Activated CD4-positive, alpha-beta memory T cell treated with anti-CD3 and anti-CD28 coated beads for 36 hours (primary cell): ENCODE measurements at regions of chr13 and their contacts with region 1.

Region 1: GRCh38 chr13:22061351-22061805 is 390.5 kb downstream of the FGF9 start:
- DNase-seq: peak; percentile 77
- H3K4me3 Mint-ChIP-seq: peak overlapping the region; percentile 44
- H3K27ac Mint-ChIP-seq: peak overlapping the region; percentile 82
- H3K4me1 Mint-ChIP-seq: peaks cover 66% of the 10 kb centered on the region
- H3K27me3 Mint-ChIP-seq: no peaks in the 10 kb centered on the region

Region 2: DNA sequence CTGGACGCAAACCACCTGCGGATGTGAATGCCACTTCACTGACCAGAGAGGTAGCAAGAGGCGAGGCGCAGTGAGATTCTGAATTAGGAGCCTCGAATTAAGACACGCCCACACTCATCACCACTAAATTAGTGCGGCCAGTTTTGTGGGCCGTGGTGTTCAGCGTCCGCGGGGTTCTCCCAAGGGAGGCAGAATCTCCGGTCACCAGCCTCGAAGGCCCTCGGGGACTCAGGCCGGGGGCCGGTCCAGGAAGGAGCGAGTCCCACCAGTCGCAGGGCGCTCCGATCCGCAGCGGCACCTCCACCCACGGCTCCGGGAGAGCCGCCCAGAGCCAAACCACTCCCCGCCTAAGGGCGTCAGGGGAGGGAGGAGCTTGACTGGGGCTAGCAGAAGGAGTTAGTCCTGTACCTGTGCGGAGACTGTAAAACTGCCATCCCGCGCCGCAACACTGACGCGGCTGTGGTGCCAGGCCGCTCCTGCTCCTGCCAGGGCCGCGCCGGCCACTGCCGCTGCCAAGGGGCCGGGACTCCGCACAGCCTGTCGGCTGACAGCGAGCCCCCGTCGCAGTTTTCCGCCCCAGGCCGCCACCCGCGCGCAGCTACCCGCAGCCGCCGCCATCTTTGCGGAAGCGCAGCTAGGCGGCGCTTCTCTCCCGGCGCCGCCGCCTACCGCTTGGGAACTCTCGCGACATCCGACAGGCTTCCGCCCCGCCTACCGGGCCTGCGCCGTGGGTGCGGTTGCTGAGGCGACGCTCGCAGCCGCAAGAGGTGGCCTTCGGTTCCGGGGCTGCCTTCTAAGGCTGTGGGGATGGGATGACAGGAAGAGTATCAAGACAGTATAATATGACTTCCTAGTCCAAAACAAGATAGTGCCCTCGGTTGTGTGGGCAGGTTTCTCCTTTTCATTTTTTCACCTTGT is 457.6 kb before region 1 on chr13 and contains the start of gene MICU2:
- CTCF ChIA-PET with region 1: no interaction called
- POLR2A ChIA-PET with region 1: no interaction called
- intact Hi-C with region 1: loop called (anchors 10 kb)
- DNase-seq: peak; percentile 97
- H3K4me3 Mint-ChIP-seq: peak within 1 kb of the TSS; percentile 81
- H3K27ac Mint-ChIP-seq: peak within 1 kb of the TSS; percentile 89
- H3K4me1 Mint-ChIP-seq: peaks cover 26% of the 10 kb centered on the region
- H3K27me3 Mint-ChIP-seq: peaks cover 5% of the 10 kb centered on the region
- total RNA-seq, gene MICU2: 32.6 to 33.3 TPM

Region 3: GRCh38 chr13:21686751-21687391 is 374.5 kb before region 1 on chr13:
- CTCF ChIA-PET with region 1: no interaction called
- POLR2A ChIA-PET with region 1: no interaction called
- intact Hi-C with region 1: loop called (anchors 2 kb)
- DNase-seq: peak; percentile 64
- H3K4me3 Mint-ChIP-seq: no peak overlapping the region
- H3K27ac Mint-ChIP-seq: peak overlapping the region; percentile 26
- H3K4me1 Mint-ChIP-seq: peaks cover 10% of the 10 kb centered on the region
- H3K27me3 Mint-ChIP-seq: peaks cover 2% of the 10 kb centered on the region

Region 4: GRCh38 chr13:21872795-21873194 is 188.6 kb before region 1 on chr13:
- CTCF ChIA-PET with region 1: no interaction called
- POLR2A ChIA-PET with region 1: no interaction called
- intact Hi-C with region 1: no loop called
- DNase-seq: no peak
- H3K4me3 Mint-ChIP-seq: no peak overlapping the region
- H3K27ac Mint-ChIP-seq: no peak overlapping the region
- H3K4me1 Mint-ChIP-seq: no peaks in the 10 kb centered on the region
- H3K27me3 Mint-ChIP-seq: peaks cover 2% of the 10 kb centered on the region

Region 5: DNA sequence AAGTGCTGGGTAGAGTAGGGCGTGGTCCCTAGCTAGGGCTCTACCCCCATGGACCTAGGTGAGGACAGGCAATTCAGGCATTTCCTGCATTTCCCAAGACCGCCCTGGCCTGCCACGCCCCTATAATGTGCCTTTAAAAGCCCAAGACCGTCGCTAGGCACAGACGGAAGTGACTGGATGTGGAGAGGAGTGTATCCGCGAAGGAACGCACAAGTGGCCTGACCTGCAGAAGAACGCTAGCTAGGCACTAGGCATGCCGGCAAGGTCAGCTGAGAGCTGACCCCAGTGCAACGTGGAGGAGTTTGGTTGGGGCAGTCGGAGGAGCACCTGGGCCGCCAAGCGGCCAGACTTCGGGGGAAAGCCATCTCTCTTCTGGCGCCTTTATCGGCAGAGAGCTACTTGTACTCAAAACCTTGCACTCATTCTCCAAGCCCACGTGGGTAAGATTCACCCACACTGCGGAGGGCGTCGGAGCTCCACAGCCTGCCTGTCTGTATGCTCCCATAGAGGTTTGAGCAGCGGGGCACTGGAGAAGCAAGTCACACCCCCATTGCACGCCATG is 20.5 kb before region 1 on chr13:
- CTCF ChIA-PET with region 1: no interaction called
- POLR2A ChIA-PET with region 1: no interaction called
- intact Hi-C with region 1: no loop called
- DNase-seq: no peak
- H3K4me3 Mint-ChIP-seq: peak overlapping the region; percentile 64
- H3K27ac Mint-ChIP-seq: no peak overlapping the region
- H3K4me1 Mint-ChIP-seq: peaks cover 12% of the 10 kb centered on the region
- H3K27me3 Mint-ChIP-seq: no peaks in the 10 kb centered on the region

Region 6: GRCh38 chr13:22073718-22074117 is 12.3 kb after region 1 on chr13:
- CTCF ChIA-PET with region 1: interaction called, 5 read pairs
- POLR2A ChIA-PET with region 1: interaction called, 5 read pairs
- intact Hi-C with region 1: loop called (anchors 1 kb)
- DNase-seq: no peak
- H3K4me3 Mint-ChIP-seq: no peak overlapping the region
- H3K27ac Mint-ChIP-seq: peak overlapping the region; percentile 28
- H3K4me1 Mint-ChIP-seq: peaks cover 47% of the 10 kb centered on the region
- H3K27me3 Mint-ChIP-seq: no peaks in the 10 kb centered on the region

Region 7: GRCh38 chr13:22126433-22127021 is 65.1 kb after region 1 on chr13:
- CTCF ChIA-PET with region 1: no interaction called
- POLR2A ChIA-PET with region 1: no interaction called
- intact Hi-C with region 1: loop called (anchors 5 kb)
- DNase-seq: no peak
- H3K4me3 Mint-ChIP-seq: no peak overlapping the region
- H3K27ac Mint-ChIP-seq: no peak overlapping the region
- H3K4me1 Mint-ChIP-seq: peaks cover 34% of the 10 kb centered on the region
- H3K27me3 Mint-ChIP-seq: no peaks in the 10 kb centered on the region

Region 8: DNA sequence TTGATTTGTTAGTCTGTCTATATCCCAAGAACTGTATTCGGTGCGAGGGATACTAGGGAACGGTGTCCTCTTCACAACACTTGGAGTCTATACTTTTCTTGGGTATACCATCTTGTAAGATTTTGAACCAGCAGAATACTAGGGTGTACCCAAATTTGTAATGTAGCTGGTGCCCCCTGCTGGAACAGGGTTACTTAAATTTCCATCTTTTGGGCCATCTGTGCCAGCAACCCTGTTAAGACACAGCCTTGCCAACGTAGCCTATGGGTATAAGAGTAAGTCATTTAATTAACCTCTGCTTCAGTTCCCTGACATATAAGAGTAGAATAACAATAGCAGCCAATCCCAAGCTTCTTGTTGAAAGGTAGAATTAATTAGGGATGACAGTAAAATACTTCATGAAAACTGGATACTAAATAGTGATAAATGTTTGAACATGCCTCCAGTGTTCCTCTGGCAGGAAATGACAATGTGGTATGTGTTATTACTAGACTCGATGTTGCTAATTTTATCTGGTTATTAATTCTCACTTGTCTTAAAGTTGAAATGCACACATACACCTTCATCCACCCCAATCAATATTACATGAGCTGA is 217.1 kb after region 1 on chr13:
- CTCF ChIA-PET with region 1: interaction called, 4 read pairs
- POLR2A ChIA-PET with region 1: no interaction called
- intact Hi-C with region 1: loop called (anchors 2 kb)
- DNase-seq: peak; percentile 75
- H3K4me3 Mint-ChIP-seq: no peak overlapping the region
- H3K27ac Mint-ChIP-seq: no peak overlapping the region
- H3K4me1 Mint-ChIP-seq: no peaks in the 10 kb centered on the region
- H3K27me3 Mint-ChIP-seq: no peaks in the 10 kb centered on the region

Region 9: GRCh38 chr13:22451327-22451741 is 390.0 kb after region 1 on chr13:
- CTCF ChIA-PET with region 1: no interaction called
- POLR2A ChIA-PET with region 1: no interaction called
- intact Hi-C with region 1: no loop called
- DNase-seq: no peak
- H3K4me3 Mint-ChIP-seq: no peak overlapping the region
- H3K27ac Mint-ChIP-seq: no peak overlapping the region
- H3K4me1 Mint-ChIP-seq: no peaks in the 10 kb centered on the region
- H3K27me3 Mint-ChIP-seq: no peaks in the 10 kb centered on the region